Calu3 (cell line): ENCODE measurements at regions of chr1 and their contacts with region 1.

Region 1: GRCh38 chr1:236904874-236905741 is 99.1 kb downstream of the MT1HL1 start:
- DNase-seq: no peak
- H3K4me3 Mint-ChIP-seq: no peak overlapping the region
- H3K27ac Mint-ChIP-seq: no peak overlapping the region
- H3K4me1 Mint-ChIP-seq: no peaks in the 10 kb centered on the region
- H3K27me3 Mint-ChIP-seq: no peaks in the 10 kb centered on the region
- CTCF ChIP-seq: no peak

Region 2: DNA sequence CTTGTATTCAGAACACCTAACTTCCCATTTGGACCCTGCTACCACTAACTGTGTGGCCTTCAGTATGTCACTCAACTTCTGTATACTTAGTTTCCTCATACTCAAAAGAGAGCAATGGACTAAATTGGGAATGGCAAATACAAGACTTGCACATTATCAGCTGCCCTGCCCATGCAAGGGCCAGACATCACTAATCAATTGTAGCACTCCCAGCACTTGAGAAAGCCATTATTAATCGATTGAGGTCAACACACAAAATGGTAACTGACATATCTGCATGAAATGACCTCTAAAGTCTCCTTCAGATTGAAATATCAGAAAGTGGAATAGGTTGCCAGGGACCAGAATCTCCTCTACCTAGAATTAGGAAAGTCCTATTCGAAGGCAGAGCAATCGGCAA is 39.9 kb after region 1 on chr1:
- CTCF ChIA-PET with region 1: no interaction called
- intact Hi-C with region 1: loop called (anchors 2 kb)
- DNase-seq: no peak
- H3K4me3 Mint-ChIP-seq: no peak overlapping the region
- H3K27ac Mint-ChIP-seq: no peak overlapping the region
- H3K4me1 Mint-ChIP-seq: no peaks in the 10 kb centered on the region
- H3K27me3 Mint-ChIP-seq: no peaks in the 10 kb centered on the region
- CTCF ChIP-seq: no peak

Region 3: GRCh38 chr1:237084258-237085077 is 179.4 kb after region 1 on chr1:
- CTCF ChIA-PET with region 1: no interaction called
- intact Hi-C with region 1: no loop called
- DNase-seq: no peak
- H3K4me3 Mint-ChIP-seq: no peak overlapping the region
- H3K27ac Mint-ChIP-seq: no peak overlapping the region
- H3K4me1 Mint-ChIP-seq: no peaks in the 10 kb centered on the region
- H3K27me3 Mint-ChIP-seq: peaks cover 13% of the 10 kb centered on the region
- CTCF ChIP-seq: no peak